Activated B cell treated with CpG ODN at 0.5 μM for 24 hours (primary cell): ENCODE measurements at regions of chr1 and their contacts with region 1.

Region 1: GRCh38 chr1:87953732-87954344 is 625.2 kb downstream of the LMO4 start:
- DNase-seq: peak; percentile 21
- ATAC-seq: peak; percentile 79
- H3K4me3 Mint-ChIP-seq: no peak overlapping the region
- H3K27ac Mint-ChIP-seq: no peak overlapping the region
- H3K4me1 Mint-ChIP-seq: peaks cover 14% of the 10 kb centered on the region
- H3K27me3 Mint-ChIP-seq: no peaks in the 10 kb centered on the region
- CTCF ChIP-seq: no peak

Region 2: GRCh38 chr1:87151500-87152421 is 802.1 kb before region 1 on chr1:
- CTCF ChIA-PET with region 1: interaction called, 3 read pairs
- POLR2A ChIA-PET with region 1: no interaction called
- intact Hi-C with region 1: loop called (anchors 5 kb)
- DNase-seq: peak; percentile 27
- ATAC-seq: peak; percentile 74
- H3K4me3 Mint-ChIP-seq: peak overlapping the region; percentile 86
- H3K27ac Mint-ChIP-seq: no peak overlapping the region
- H3K4me1 Mint-ChIP-seq: peaks cover 14% of the 10 kb centered on the region
- H3K27me3 Mint-ChIP-seq: peaks cover 34% of the 10 kb centered on the region
- CTCF ChIP-seq: no peak

Region 3: GRCh38 chr1:87318056-87318650 is 635.7 kb before region 1 on chr1:
- CTCF ChIA-PET with region 1: interaction called, 82 read pairs
- POLR2A ChIA-PET with region 1: no interaction called
- intact Hi-C with region 1: no loop called
- DNase-seq: no peak
- ATAC-seq: peak; percentile 47
- H3K4me3 Mint-ChIP-seq: peak overlapping the region; percentile 29
- H3K27ac Mint-ChIP-seq: no peak overlapping the region
- H3K4me1 Mint-ChIP-seq: peaks cover 17% of the 10 kb centered on the region
- H3K27me3 Mint-ChIP-seq: no peaks in the 10 kb centered on the region
- CTCF ChIP-seq: no peak

Region 4: GRCh38 chr1:87501738-87502137 is 452.1 kb before region 1 on chr1:
- CTCF ChIA-PET with region 1: no interaction called
- POLR2A ChIA-PET with region 1: no interaction called
- intact Hi-C with region 1: loop called (anchors 10 kb)
- DNase-seq: no peak
- ATAC-seq: no peak
- H3K4me3 Mint-ChIP-seq: no peak overlapping the region
- H3K27ac Mint-ChIP-seq: no peak overlapping the region
- H3K4me1 Mint-ChIP-seq: peaks cover 8% of the 10 kb centered on the region
- H3K27me3 Mint-ChIP-seq: no peaks in the 10 kb centered on the region
- CTCF ChIP-seq: no peak

Region 5: GRCh38 chr1:87684194-87684593 is 269.6 kb before region 1 on chr1:
- CTCF ChIA-PET with region 1: interaction called, 5 read pairs
- POLR2A ChIA-PET with region 1: no interaction called
- intact Hi-C with region 1: loop called (anchors 5 kb)
- DNase-seq: no peak
- ATAC-seq: no peak
- H3K4me3 Mint-ChIP-seq: peak overlapping the region; percentile 57
- H3K27ac Mint-ChIP-seq: no peak overlapping the region
- H3K4me1 Mint-ChIP-seq: peaks cover 8% of the 10 kb centered on the region
- H3K27me3 Mint-ChIP-seq: no peaks in the 10 kb centered on the region
- CTCF ChIP-seq: no peak

Region 6: DNA sequence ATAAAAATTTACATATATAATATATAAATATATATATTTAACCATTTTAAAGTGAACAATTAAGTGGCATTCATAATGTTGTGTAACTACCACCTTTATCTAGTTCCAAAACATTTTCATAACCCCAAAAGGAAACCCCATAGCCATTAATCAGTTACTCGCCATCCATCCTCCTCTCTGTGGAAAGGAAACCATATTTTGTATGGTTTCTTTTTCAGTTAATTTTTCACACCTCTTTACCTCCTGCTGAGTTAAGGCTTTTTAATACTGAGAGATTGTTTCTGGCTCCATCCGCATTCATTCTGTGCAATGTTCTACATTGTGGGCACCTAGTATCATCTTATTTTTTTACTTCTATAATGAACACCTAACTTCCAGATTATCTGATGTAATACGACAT is 113.1 kb before region 1 on chr1:
- CTCF ChIA-PET with region 1: no interaction called
- POLR2A ChIA-PET with region 1: no interaction called
- intact Hi-C with region 1: no loop called
- DNase-seq: no peak
- ATAC-seq: no peak
- H3K4me3 Mint-ChIP-seq: no peak overlapping the region
- H3K27ac Mint-ChIP-seq: no peak overlapping the region
- H3K4me1 Mint-ChIP-seq: no peaks in the 10 kb centered on the region
- H3K27me3 Mint-ChIP-seq: no peaks in the 10 kb centered on the region
- CTCF ChIP-seq: no peak

Region 7: DNA sequence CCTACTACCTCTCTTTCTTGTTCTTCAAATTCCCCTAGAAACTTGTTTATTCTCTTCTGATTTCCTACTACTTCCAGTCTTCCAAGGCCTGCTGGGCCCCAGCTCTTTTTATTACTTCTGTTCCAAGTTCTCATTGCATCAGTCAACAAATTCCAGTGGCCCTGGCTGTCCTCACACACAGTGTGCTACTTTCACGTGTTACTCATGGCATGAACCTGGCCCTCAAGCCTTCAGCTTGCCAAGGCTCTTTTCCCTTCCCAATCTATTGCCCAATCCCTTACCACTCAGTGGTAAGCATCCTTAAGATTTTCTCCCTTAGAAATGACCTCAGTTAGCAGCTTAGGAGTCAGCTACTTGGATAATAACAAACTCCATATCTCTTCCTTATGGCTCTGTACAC is 11.7 kb before region 1 on chr1:
- CTCF ChIA-PET with region 1: interaction called, 10 read pairs
- POLR2A ChIA-PET with region 1: no interaction called
- intact Hi-C with region 1: no loop called
- DNase-seq: no peak
- ATAC-seq: no peak
- H3K4me3 Mint-ChIP-seq: no peak overlapping the region
- H3K27ac Mint-ChIP-seq: no peak overlapping the region
- H3K4me1 Mint-ChIP-seq: no peaks in the 10 kb centered on the region
- H3K27me3 Mint-ChIP-seq: no peaks in the 10 kb centered on the region
- CTCF ChIP-seq: no peak

Region 8: GRCh38 chr1:87986130-87986866 is 32.5 kb after region 1 on chr1:
- CTCF ChIA-PET with region 1: no interaction called
- POLR2A ChIA-PET with region 1: no interaction called
- intact Hi-C with region 1: no loop called
- DNase-seq: no peak
- ATAC-seq: no peak
- H3K4me3 Mint-ChIP-seq: no peak overlapping the region
- H3K27ac Mint-ChIP-seq: no peak overlapping the region
- H3K4me1 Mint-ChIP-seq: no peaks in the 10 kb centered on the region
- H3K27me3 Mint-ChIP-seq: peaks cover 3% of the 10 kb centered on the region
- CTCF ChIP-seq: no peak